ENCODE measurements at regions of chr4 and their contacts with region 1.

Region 1: DNA sequence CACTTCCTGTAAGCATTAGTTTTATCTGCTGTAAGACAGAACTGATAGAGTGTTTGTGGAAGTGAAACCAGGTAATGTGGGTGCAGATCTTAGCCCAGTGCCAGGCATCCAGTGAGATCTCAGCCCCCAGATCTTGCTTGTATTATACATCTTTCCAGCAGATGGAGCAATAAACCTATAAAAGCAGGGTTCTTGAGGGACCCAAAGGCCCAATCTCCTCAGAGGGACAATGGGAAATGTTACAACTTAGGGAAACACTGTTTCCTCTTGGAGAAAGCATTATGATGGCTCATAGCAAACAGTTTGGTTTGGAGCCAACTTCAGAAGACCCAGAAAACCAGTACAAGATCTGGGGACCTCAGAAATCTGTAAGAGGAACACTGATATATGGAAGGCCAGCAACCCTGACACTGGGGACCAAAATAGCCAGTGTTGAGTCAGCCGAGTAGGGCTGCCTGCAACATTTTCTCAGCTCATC is 206.3 kb downstream of the SLC7A11 start:
- DNase-seq: no peak
- H3K4me3 ChIP-seq: no peak overlapping the region
- H3K27ac ChIP-seq: no peak overlapping the region
- H3K4me1 ChIP-seq: no peaks in the 10 kb centered on the region
- H3K27me3 ChIP-seq: no peaks in the 10 kb centered on the region
- CTCF ChIP-seq: peak in 3 of 4 experiments; percentile 38 to 61 (median 55)
- POLR2A ChIP-seq: no peak

Region 2: GRCh38 chr4:138053641-138054301 is 18.0 kb after region 1 on chr4:
- intact Hi-C with region 1: loop called (anchors 1 kb)
- DNase-seq: no peak
- H3K4me3 ChIP-seq: no peak overlapping the region
- H3K27ac ChIP-seq: no peak overlapping the region
- H3K4me1 ChIP-seq: no peaks in the 10 kb centered on the region
- H3K27me3 ChIP-seq: no peaks in the 10 kb centered on the region
- CTCF ChIP-seq: no peak
- POLR2A ChIP-seq: no peak

Region 3: GRCh38 chr4:138090150-138090917 is 54.5 kb after region 1 on chr4:
- intact Hi-C with region 1: loop called (anchors 1 kb)
- DNase-seq: peak; percentile 72
- H3K4me3 ChIP-seq: no peak overlapping the region
- H3K27ac ChIP-seq: no peak overlapping the region
- H3K4me1 ChIP-seq: no peaks in the 10 kb centered on the region
- H3K27me3 ChIP-seq: no peaks in the 10 kb centered on the region
- CTCF ChIP-seq: peak; percentile 73 to 91 (median 80)
- POLR2A ChIP-seq: no peak

Region 4: DNA sequence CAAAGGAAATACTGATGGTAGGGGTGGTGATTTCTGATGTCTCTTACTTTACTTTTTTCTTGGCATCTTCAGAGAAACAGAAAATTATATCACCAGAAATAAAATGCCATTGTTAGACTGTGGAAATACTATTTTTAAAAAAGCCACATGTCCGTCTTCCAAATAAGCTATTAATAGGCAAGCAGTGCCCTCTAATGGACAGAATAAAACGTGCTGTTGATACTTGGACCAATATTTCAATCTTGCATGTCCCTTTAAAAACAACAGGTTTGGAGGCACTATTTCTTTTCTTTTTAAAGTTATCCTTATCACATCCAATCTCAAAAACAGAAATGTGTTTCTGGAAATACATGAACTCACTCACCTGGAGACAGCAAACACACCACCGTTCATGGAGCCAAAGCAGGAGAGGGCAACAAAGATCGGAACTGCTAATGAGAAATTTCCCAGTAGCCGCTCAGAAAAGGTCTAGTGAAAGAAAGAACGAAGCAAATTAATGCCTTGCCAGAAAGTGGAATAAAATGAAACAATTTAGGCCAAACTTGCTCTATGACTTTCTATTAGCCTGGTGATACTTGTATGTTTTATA is 147.1 kb after region 1 on chr4:
- intact Hi-C with region 1: loop called (anchors 2 kb)
- DNase-seq: peak; percentile 24
- H3K4me3 ChIP-seq: no peak overlapping the region
- H3K27ac ChIP-seq: no peak overlapping the region
- H3K4me1 ChIP-seq: no peaks in the 10 kb centered on the region
- H3K27me3 ChIP-seq: no peaks in the 10 kb centered on the region
- CTCF ChIP-seq: peak in 3 of 4 experiments; percentile 53 to 71 (median 68)
- POLR2A ChIP-seq: no peak

Region 5: DNA sequence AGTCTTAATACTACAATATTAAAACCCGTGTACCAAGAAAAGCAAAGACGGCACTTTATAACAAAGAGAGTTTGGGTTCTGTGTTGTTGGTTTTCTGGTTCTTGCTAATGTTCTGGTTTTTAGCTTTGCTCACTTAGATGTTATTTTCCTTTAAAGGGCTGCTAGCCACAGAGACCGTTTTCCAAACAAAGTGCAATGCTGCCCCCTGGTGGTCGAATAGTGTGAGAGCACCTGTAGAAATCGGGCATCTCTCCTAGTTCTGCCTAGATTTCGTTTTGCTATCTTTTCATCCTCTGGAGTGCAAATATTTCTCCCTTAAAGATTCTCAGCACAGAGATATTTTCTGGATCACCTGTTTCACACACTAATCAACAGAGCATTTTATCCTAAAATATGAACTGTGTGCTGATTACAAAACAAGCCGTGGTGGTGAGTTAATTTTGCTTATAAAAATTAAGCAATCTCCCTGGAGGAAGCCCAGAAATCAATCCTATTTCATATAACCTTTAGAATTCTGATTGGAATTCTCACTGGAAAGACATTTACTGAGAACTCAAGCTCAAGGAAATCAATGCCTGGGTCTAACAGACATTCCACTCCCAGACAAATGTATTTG is 645.3 kb after region 1 on chr4:
- intact Hi-C with region 1: loop called (anchors 2 kb)
- DNase-seq: peak; percentile 73
- H3K4me3 ChIP-seq: no peak overlapping the region
- H3K27ac ChIP-seq: no peak overlapping the region
- H3K4me1 ChIP-seq: no peaks in the 10 kb centered on the region
- H3K27me3 ChIP-seq: no peaks in the 10 kb centered on the region
- CTCF ChIP-seq: peak; percentile 83 to 99 (median 91)
- POLR2A ChIP-seq: no peak

Region 6: DNA sequence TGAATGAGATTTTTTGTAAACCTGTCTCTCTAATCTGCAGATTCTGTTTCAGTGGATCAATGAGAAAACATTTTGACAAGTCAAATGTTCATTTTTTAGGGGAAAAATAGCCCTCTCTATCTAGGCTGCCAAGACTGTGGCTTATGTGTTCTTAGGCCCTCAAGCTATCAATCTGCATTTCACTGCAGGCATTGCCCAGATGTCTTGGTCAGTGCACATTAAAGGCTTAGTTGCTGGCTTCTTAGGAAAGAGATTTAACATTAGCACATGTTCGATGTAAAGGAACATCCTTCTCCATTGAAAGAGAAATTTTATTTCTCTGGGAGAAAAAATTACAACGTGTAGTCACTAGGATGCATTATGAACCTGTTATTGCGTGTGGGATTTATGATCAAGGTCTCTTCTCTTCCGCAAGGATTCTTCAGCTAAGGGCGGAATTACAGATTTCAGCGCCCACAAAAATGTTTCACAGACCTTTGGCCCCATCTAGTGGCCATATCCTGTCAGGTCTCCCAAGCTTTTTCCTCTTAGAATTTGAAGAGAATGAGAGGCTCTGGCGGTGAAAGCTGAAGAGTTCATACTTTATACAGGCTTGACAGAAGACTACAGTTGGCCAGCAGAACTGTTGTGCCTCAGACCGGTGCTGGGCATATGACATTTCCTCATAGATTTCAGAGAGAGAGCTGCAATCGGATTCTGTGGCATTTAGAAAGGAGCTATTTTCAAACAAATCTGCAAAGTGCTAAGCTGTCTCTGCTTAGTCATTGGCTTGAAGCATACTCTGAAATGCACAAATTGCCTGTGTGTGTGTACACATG is 835.1 kb after region 1 on chr4:
- intact Hi-C with region 1: loop called (anchors 2 kb)
- DNase-seq: peak; percentile 70
- H3K4me3 ChIP-seq: no peak overlapping the region
- H3K27ac ChIP-seq: no peak overlapping the region
- H3K4me1 ChIP-seq: no peaks in the 10 kb centered on the region
- H3K27me3 ChIP-seq: no peaks in the 10 kb centered on the region
- CTCF ChIP-seq: peak; percentile 72 to 88 (median 86)
- POLR2A ChIP-seq: no peak

Region 7: GRCh38 chr4:138919094-138919936 is 883.5 kb after region 1 on chr4:
- intact Hi-C with region 1: loop called (anchors 5 kb)
- DNase-seq: peak; percentile 76
- H3K4me3 ChIP-seq: no peak overlapping the region
- H3K27ac ChIP-seq: no peak overlapping the region
- H3K4me1 ChIP-seq: no peaks in the 10 kb centered on the region
- H3K27me3 ChIP-seq: no peaks in the 10 kb centered on the region
- CTCF ChIP-seq: peak in 3 of 4 experiments; percentile 53 to 88 (median 66)
- POLR2A ChIP-seq: no peak

Region 8: DNA sequence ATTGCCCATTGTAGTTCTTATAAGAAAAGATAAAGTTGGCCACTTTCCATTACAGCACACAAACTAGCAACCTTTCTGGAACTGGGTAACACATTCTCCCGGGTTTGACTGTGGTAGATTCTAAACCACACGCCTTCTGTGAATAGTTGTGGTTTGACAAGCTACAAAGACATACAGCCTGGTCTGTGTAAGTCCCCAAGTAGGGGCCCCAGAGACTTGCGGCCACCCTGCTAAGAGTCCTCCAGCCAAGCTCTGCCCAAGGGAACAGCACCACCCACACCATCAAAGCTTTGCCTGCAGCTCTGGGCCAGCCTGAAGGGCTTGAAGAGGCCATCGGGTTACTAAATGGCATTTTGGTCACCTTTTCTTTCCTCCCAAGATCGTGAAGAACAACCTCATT is 1914.7 kb after region 1 on chr4:
- intact Hi-C with region 1: no loop called
- DNase-seq: no peak
- H3K4me3 ChIP-seq: no peak overlapping the region
- H3K27ac ChIP-seq: no peak overlapping the region
- H3K4me1 ChIP-seq: no peaks in the 10 kb centered on the region
- H3K27me3 ChIP-seq: no peaks in the 10 kb centered on the region
- CTCF ChIP-seq: no peak
- POLR2A ChIP-seq: no peak

Measured in prostate gland (tissue), 2 donors.